Right lobe of liver (tissue), 6 donors: ENCODE measurements at regions of chr17 and their contacts with region 1.

Region 1: DNA sequence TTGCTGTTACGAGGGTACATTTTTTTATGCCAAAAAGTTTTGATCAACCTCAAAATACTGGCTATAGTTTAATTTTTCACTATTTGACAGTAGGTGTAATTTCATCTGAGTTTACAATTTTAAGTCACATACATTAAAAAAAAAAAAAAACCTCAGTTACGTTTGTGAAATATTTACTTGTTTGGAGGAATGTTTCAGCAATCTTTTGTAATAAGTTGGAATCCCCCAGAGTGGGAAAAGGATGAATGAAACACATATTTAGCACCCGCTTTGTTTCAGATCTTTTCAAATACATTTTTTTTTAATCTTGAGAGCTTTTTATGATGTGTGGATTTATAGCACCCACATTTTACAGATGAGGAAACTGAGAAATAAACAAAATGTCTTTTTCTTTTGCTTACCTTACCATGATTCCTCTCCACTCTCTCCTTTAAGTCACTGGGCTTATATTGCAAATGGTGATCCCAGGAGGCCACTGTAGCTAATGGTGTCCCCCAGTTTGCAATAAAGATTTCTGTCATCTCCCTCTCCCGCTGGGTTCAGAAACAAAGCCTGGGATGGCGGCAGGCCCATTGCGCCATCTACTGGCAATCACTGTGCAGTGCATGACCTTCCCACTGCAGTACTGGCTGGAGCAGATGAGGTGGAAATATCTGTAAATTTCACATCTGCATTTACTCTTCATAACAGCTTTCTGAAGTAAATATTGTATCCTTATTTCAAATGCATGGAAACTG is 27.7 kb downstream of the TBC1D3B start:
- DNase-seq: peak; percentile 72 to 79 (median 77)
- ATAC-seq: peak; percentile 95 to 98 (median 97)
- H3K4me3 ChIP-seq: no peak overlapping the region
- H3K27ac ChIP-seq: no peak overlapping the region
- H3K4me1 ChIP-seq: no peaks in the 10 kb centered on the region
- H3K27me3 ChIP-seq: no peaks in the 10 kb centered on the region
- CTCF ChIP-seq: peak; percentile 97 to 100 (median 100)
- POLR2A ChIP-seq: no peak

Region 2: GRCh38 chr17:35969558-35970380 is 179.0 kb before region 1 on chr17:
- intact Hi-C with region 1: loop called in 1 of 2 experiments (anchors 5 kb)
- DNase-seq: peak in 2 of 3 donors; percentile 65 to 85
- ATAC-seq: peak; percentile 56 to 69 (median 60)
- H3K4me3 ChIP-seq: no peak overlapping the region
- H3K27ac ChIP-seq: peak overlapping the region in 1 of 3 donors; percentile 29
- H3K4me1 ChIP-seq: peaks cover 0 to 54% (median 26%) of the 10 kb centered on the region in 4 donors
- H3K27me3 ChIP-seq: no peaks in the 10 kb centered on the region
- CTCF ChIP-seq: peak; percentile 87 to 93 (median 90)
- POLR2A ChIP-seq: no peak

Region 3: DNA sequence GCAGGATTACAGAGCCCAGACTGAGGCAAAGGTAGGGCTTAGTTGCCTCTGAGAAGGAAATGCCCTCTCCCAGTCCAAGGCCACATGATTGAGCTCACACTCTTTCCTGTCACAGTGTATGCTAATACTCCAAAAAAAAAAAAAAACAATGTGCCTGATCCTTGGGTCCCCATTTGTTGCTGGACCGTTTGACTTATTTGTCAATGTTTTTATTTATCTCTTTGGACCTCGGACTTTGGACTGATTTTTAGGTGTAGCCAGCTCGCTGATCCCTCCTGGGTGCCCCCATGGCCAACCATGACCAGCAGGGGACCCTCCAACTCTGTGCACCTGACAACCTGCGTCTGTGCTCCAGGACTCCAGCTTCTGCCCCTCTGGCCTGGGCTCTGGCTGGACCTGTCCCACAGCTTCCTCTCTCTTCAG is 166.8 kb before region 1 on chr17:
- intact Hi-C with region 1: loop called in 1 of 2 experiments (anchors 10 kb)
- DNase-seq: peak; percentile 77 to 89 (median 88)
- ATAC-seq: peak; percentile 71 to 86 (median 74)
- H3K4me3 ChIP-seq: peak overlapping the region; percentile 48 to 95 (median 59)
- H3K27ac ChIP-seq: peak overlapping the region; percentile 56 to 88 (median 61)
- H3K4me1 ChIP-seq: peaks cover 0 to 39% (median 16%) of the 10 kb centered on the region in 4 donors
- H3K27me3 ChIP-seq: no peaks in the 10 kb centered on the region
- CTCF ChIP-seq: peak; percentile 42 to 86 (median 64)
- POLR2A ChIP-seq: no peak

Region 4: GRCh38 chr17:36017799-36018198 is 130.9 kb before region 1 on chr17 and contains the start of gene CCL23:
- intact Hi-C with region 1: no loop called
- DNase-seq: no peak
- ATAC-seq: peak; percentile 63 to 73 (median 70)
- H3K4me3 ChIP-seq: no peak within 1 kb of the TSS
- H3K27ac ChIP-seq: peak within 1 kb of the TSS in 2 of 3 donors; percentile 19 to 46
- H3K4me1 ChIP-seq: no peaks in the 10 kb centered on the region
- H3K27me3 ChIP-seq: no peaks in the 10 kb centered on the region
- CTCF ChIP-seq: no peak
- POLR2A ChIP-seq: no peak
- total RNA-seq, gene CCL23: 1.1 to 12.7 (median 2.1) TPM

Region 5: GRCh38 chr17:36072431-36073121 is 76.2 kb before region 1 on chr17:
- intact Hi-C with region 1: loop called in 1 of 2 experiments (anchors 10 kb)
- DNase-seq: peak; percentile 57 to 76 (median 70)
- ATAC-seq: peak; percentile 91 to 98 (median 96)
- H3K4me3 ChIP-seq: no peak overlapping the region
- H3K27ac ChIP-seq: no peak overlapping the region
- H3K4me1 ChIP-seq: no peaks in the 10 kb centered on the region
- H3K27me3 ChIP-seq: no peaks in the 10 kb centered on the region
- CTCF ChIP-seq: peak; percentile 74 to 93 (median 88)
- POLR2A ChIP-seq: no peak

Region 6: GRCh38 chr17:36105781-36106492 is 42.8 kb before region 1 on chr17:
- intact Hi-C with region 1: no loop called
- DNase-seq: no peak
- ATAC-seq: peak in 3 of 4 donors; percentile 13 to 28 (median 19)
- H3K4me3 ChIP-seq: no peak overlapping the region
- H3K27ac ChIP-seq: no peak overlapping the region
- H3K4me1 ChIP-seq: no peaks in the 10 kb centered on the region
- H3K27me3 ChIP-seq: no peaks in the 10 kb centered on the region
- CTCF ChIP-seq: no peak
- POLR2A ChIP-seq: no peak